ENCODE measurements at regions of chr4 and their contacts with region 1.

Region 1: DNA sequence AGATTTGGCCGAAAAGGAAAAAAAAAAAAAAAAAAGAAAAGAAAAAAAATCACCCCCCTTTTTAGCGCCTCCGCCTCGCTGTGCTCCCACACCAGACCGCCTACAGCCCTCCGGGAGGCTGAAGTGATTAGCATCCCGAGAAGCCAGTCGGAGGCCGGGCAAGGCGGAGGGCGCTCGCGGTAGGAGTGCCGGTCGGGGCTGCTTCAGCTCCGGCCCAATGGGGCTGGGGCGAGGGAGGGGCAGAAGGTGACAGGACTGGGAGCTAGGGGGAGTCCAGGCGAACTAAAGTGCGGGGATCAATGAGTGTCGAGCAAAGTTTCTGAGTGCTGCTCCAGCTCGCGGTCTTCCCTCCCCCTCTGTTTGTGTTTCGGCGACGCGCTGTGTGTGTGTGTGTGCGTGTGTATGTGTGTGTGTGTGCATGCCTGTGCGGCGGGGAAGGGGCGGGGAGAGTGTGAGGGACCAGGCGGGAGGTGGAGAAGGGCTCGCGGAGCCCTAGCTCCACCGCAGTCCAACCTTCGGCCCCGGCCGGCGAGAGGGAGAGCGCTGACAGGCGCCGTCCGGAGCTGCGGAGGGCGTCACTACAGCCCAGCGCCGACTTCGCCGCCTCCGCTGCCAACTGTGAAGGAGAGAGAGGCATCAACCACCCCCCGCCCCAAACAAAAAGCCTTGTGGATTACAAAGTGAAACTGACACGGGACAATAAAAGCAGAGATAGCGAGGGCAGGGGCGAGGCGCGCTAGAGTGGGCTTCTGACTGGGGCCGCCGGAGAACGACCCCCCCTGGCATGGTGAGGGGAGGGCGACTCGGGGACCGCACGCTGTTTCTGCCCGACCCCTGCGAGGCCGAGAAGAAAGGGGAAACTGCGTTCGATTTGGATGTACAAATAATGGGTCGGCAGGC is at the start of gene FAT4:
- DNase-seq: peak; percentile 69 to 88
- H3K4me3 ChIP-seq: peak within 1 kb of the TSS; percentile 85
- H3K27ac ChIP-seq: no peak within 1 kb of the TSS
- H3K4me1 ChIP-seq: peaks cover 9% of the 10 kb centered on the region; the same call in 1 of the 2 replicates
- H3K27me3 ChIP-seq: 0 out of 2 replicates have a peak, but pooled peaks cover 12% of the 10 kb centered on the region
- CTCF ChIP-seq: no peak
- total RNA-seq, gene FAT4: 4.5 and 5.5 TPM in 2 replicates

Region 2: GRCh38 chr4:125041372-125041930 is 273.5 kb before region 1 on chr4:
- CTCF ChIA-PET with region 1: no interaction called
- POLR2A ChIA-PET with region 1: no interaction called
- intact Hi-C with region 1: no loop called
- DNase-seq: no peak
- H3K4me3 ChIP-seq: no peak overlapping the region
- H3K27ac ChIP-seq: no peak overlapping the region
- H3K4me1 ChIP-seq: no peaks in the 10 kb centered on the region
- H3K27me3 ChIP-seq: no peaks in the 10 kb centered on the region
- CTCF ChIP-seq: no peak

Region 3: GRCh38 chr4:125389713-125390112 is 74.8 kb after region 1 on chr4:
- CTCF ChIA-PET with region 1: no interaction called
- POLR2A ChIA-PET with region 1: no interaction called
- intact Hi-C with region 1: loop called (anchors 2 kb)
- DNase-seq: peak; percentile 4 to 46
- H3K4me3 ChIP-seq: no peak overlapping the region
- H3K27ac ChIP-seq: no peak overlapping the region
- H3K4me1 ChIP-seq: no peaks in the 10 kb centered on the region
- H3K27me3 ChIP-seq: no peaks in the 10 kb centered on the region
- CTCF ChIP-seq: no peak

Region 4: DNA sequence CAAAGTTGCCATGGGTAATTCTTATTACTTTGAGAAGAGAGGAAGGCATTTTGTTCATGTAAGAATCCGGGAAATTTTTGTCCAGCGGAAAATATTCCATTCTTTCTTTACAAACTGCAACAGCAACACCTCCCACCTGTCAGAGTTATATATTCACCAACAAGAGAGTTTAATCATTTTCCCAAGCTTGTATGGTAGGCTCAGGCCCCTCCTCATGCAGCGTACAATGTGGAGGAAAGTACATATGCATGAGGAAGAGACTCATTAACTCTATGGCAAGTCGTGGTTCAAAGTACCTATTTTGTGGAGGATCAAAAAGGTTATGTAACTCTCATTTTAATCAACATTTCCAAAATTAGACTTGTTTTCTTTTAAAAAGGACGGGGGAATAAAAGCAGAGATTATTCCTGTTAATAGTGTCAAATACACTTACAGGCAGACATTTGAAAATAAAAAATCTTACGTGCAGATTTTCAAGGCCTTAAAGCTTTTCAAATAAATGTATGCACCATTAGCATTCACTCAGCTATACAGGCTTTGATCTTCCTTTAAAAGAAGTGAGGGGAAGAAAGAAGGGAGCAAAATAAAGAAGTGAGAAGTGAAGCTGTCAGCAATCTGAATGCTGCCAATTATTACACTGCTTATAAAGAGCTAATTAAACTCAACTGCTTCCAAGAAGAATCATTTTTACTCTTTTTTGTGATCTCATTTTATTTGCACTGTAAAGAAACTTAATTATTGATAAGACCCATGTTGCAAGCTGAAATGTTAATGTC is 204.6 kb after region 1 on chr4:
- CTCF ChIA-PET with region 1: no interaction called
- POLR2A ChIA-PET with region 1: no interaction called
- intact Hi-C with region 1: loop called (anchors 10 kb)
- DNase-seq: no peak
- H3K4me3 ChIP-seq: no peak overlapping the region
- H3K27ac ChIP-seq: no peak overlapping the region
- H3K4me1 ChIP-seq: no peaks in the 10 kb centered on the region
- H3K27me3 ChIP-seq: no peaks in the 10 kb centered on the region
- CTCF ChIP-seq: no peak

Region 5: DNA sequence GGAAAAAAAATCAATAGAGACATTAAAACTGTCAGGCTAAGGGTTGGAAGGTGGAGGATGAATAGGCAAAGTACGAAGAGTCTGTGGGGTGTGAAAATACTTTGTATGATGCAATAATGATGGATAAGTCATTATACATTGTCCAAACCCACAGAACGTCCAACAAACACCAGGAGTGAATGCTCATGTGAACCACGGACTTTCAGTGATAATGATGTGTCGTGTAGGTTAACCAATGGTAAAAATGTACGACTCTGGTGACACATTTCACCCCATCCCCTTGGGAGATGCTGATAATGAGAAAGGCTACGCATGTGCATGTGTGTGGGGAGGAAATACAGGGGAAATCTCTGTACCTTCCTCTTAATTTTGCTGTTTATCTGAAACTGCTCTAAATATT is 665.0 kb after region 1 on chr4:
- CTCF ChIA-PET with region 1: interaction called, 4 read pairs
- POLR2A ChIA-PET with region 1: no interaction called
- intact Hi-C with region 1: loop called (anchors 1 kb)
- DNase-seq: no peak
- H3K4me3 ChIP-seq: no peak overlapping the region
- H3K27ac ChIP-seq: no peak overlapping the region
- H3K4me1 ChIP-seq: no peaks in the 10 kb centered on the region
- H3K27me3 ChIP-seq: no peaks in the 10 kb centered on the region
- CTCF ChIP-seq: no peak

Region 6: DNA sequence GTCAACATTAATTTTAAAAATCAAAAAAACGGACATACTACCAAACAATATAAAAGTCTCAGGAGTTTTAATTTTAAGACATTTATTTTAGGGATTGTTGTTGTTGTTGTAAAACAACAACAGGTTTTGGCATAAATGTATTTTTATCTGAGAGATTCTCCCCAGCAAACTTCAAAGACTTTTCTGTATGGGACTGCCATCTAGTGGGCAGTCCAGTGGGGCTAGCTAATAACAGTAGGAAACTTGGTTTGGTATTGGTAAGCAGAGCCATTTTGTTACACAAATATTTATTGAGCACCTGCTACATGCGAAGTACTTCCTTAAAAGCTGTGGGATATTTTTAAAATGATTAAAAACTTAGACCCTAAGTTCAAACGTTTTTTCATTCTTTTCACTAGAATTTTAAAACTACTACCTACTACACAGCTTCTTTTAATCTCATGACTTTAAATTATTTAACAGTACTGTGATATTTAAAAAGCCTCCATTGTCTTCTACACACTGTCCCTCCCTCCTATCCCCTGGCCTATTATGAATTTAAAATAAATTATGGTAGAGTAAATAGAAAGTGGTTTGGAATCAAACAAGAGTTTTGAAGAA is 1289.4 kb after region 1 on chr4:
- CTCF ChIA-PET with region 1: no interaction called
- POLR2A ChIA-PET with region 1: no interaction called
- intact Hi-C with region 1: loop called (anchors 1 kb)
- DNase-seq: peak in 1 of 2 experiments; percentile 11
- H3K4me3 ChIP-seq: no peak overlapping the region
- H3K27ac ChIP-seq: no peak overlapping the region
- H3K4me1 ChIP-seq: no peaks in the 10 kb centered on the region
- H3K27me3 ChIP-seq: no peaks in the 10 kb centered on the region
- CTCF ChIP-seq: peak; percentile 65

Measured in PC-9 (cell line).